WTC11 (cell line): ENCODE measurements at regions of chr7 and their contacts with region 1.

Region 1: DNA sequence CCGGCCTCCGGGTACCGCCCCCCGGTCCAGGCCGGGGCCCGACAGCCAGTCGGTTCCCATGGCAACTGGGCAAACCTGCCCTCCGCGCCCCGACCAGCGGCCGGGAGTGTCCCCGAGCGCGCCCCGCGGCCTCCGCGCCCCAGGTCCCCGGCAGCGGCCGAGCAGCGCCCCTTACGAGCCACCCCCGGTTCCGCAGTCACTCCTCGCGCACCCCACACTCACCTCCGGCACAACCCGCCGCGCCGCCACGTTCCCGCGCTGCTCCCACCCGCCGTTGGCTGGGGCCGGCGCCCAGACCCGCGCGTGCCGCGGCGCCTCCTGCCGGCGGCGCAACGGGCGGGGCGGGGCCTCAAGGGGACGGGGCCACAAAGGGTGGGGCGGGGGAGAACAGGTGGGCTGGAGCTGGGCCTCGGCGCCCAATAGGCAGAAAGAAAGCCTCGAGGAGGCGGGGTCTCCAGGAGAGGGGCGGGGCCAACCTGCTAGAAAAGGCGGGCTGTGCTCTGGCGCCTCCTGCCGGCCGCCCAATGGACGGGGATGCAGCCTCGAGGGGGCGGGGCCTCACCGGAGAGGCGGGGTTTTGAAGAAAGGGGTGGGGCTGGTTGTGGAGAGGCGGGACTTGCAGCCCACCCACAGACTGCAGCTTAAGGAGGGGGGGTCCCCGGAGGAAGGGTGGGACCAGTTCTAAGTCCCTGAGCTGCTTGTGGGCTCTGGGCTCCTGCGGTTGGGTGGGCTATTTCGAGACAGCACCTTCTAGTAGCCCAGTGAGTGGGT is at the start of gene RADIL:
- DNase-seq: peak; percentile 98
- ATAC-seq: peak; percentile 92
- H3K4me3 Mint-ChIP-seq: peak within 1 kb of the TSS; percentile 81
- H3K27ac Mint-ChIP-seq: peak within 1 kb of the TSS; percentile 50
- H3K4me1 Mint-ChIP-seq: peaks cover 13% of the 10 kb centered on the region
- H3K27me3 Mint-ChIP-seq: peaks cover 12% of the 10 kb centered on the region; the same call in 1 of the 2 replicates
- CTCF ChIP-seq: peak; percentile 88
- total RNA-seq, gene RADIL: 8.6 to 12.1 TPM (median 11.1 TPM) in 3 replicates

Region 2: GRCh38 chr7:4797858-4798705 is 85.5 kb before region 1 on chr7:
- CTCF ChIA-PET with region 1: interaction called, 72 read pairs
- POLR2A ChIA-PET with region 1: no interaction called
- DNase-seq: peak; percentile 83
- ATAC-seq: peak; percentile 92
- H3K4me3 Mint-ChIP-seq: no peak overlapping the region
- H3K27ac Mint-ChIP-seq: no peak overlapping the region
- H3K4me1 Mint-ChIP-seq: peaks cover 5% of the 10 kb centered on the region
- H3K27me3 Mint-ChIP-seq: no peaks in the 10 kb centered on the region
- CTCF ChIP-seq: peak; percentile 81

Region 3: GRCh38 chr7:4830176-4830575 is 53.4 kb before region 1 on chr7:
- CTCF ChIA-PET with region 1: interaction called, 83 read pairs
- POLR2A ChIA-PET with region 1: no interaction called
- DNase-seq: peak; percentile 88
- ATAC-seq: peak; percentile 98
- H3K4me3 Mint-ChIP-seq: no peak overlapping the region
- H3K27ac Mint-ChIP-seq: peak overlapping the region; percentile 87
- H3K4me1 Mint-ChIP-seq: peaks cover 2% of the 10 kb centered on the region
- H3K27me3 Mint-ChIP-seq: no peaks in the 10 kb centered on the region
- CTCF ChIP-seq: peak; percentile 66; the same call in 1 of the 2 replicates

Region 4: DNA sequence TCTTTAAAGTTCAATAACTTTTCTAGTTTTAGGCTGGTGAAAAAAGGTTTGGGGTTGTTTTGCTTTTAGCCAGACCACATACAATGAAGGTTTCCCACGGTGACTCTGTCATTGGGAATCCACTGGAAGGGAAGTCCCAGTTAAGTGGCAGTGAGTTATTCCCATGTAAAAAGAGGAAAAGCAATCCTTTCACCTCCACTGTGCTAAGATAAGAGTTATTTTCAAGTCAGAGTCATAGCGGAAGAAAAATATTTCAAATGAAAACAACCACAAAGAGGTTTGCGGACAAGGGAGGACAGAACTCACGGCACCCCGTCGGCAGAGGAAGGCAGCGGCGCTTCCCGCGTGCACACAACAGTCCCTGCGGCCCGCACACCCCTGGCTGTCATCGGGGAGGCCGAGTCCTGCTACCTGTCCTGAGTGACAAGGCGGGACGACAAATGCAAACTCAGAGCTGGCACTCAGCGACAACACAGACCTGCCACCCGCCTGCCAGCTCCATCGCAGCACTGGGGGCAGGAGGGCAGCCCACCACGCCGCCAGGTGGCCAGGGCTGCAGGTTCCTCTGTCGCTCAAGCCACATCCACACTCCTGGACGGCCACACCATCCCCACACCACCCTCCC is 12.4 kb before region 1 on chr7:
- CTCF ChIA-PET with region 1: interaction called, 14 read pairs
- POLR2A ChIA-PET with region 1: no interaction called
- DNase-seq: no peak
- ATAC-seq: no peak
- H3K4me3 Mint-ChIP-seq: no peak overlapping the region
- H3K27ac Mint-ChIP-seq: no peak overlapping the region
- H3K4me1 Mint-ChIP-seq: peaks cover 11% of the 10 kb centered on the region
- H3K27me3 Mint-ChIP-seq: no peaks in the 10 kb centered on the region; the same call in 1 of the 2 replicates
- CTCF ChIP-seq: no peak

Region 5: GRCh38 chr7:4958477-4959301 is 75.1 kb after region 1 on chr7 and contains the start of gene MMD2:
- CTCF ChIA-PET with region 1: interaction called, 11 read pairs
- POLR2A ChIA-PET with region 1: no interaction called
- DNase-seq: peak; percentile 55
- ATAC-seq: peak; percentile 51
- H3K4me3 Mint-ChIP-seq: peak within 1 kb of the TSS; percentile 85
- H3K27ac Mint-ChIP-seq: no peak within 1 kb of the TSS
- H3K4me1 Mint-ChIP-seq: peaks cover 4% of the 10 kb centered on the region
- H3K27me3 Mint-ChIP-seq: peaks cover 40% of the 10 kb centered on the region
- CTCF ChIP-seq: no peak
- total RNA-seq, gene MMD2: 0.09 TPM in 1 of 3 replicates, not detected in the others

Region 6: GRCh38 chr7:5088906-5089305 is 205.3 kb after region 1 on chr7:
- CTCF ChIA-PET with region 1: interaction called, 25 read pairs
- POLR2A ChIA-PET with region 1: interaction called, 5 read pairs
- DNase-seq: no peak
- ATAC-seq: no peak
- H3K4me3 Mint-ChIP-seq: peak overlapping the region; percentile 6; the same call in 1 of the 2 replicates
- H3K27ac Mint-ChIP-seq: peak overlapping the region; percentile 23; the same call in 1 of the 2 replicates
- H3K4me1 Mint-ChIP-seq: peaks cover 6% of the 10 kb centered on the region; the same call in 1 of the 2 replicates
- H3K27me3 Mint-ChIP-seq: peaks cover 25% of the 10 kb centered on the region
- CTCF ChIP-seq: no peak